Ascending aorta (tissue), 2 donors: ENCODE measurements at regions of chr10 and their contacts with region 1.

Region 1: DNA sequence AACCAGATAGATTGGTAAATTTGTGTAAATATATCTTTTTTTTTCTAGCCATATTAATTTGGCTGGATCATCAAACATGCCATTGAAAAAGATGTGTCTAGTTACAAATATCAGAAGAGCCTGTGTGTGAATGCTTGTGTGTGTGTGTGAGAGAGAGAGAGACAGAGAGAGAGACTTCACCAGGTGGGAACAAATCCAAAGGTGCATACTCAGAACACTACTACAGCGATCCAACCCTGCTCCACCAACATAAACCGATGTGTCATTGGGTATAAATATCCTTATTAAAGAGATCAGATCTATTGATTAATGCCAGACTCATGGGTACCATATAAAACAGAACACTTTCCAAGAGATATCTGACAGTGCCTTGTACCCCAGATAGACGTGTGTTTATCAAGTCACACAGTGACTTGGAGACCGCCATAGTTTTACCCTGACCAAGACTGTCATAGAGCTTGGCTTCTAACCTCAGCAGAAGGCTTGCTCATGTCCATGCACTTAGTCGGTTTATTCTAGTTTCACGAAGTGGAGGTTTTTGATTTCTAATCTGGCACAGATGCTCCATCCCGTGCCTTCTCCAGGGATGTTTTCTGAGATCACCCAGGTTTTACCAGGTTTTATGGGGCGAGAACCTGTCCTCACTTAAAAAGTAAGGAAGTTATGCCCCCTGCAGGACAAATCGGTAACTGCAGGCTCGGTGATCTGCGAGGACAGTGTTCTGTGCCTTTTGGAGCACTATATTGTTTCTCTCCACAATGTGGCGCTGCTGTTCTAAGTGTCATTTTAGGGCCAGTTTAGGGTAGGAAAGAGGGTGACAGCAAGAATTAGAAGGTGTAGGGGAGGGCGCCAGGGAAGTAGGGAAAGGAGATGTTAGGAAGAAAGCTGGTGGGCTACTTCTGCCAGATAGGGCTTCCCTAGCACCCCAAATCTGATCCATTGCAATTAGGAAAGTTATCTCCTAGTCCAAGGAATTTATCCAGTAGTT is 29.3 kb upstream of the WNT8B start:
- DNase-seq: peak; percentile 63 to 97
- H3K4me3 ChIP-seq: no peak overlapping the region
- H3K27ac ChIP-seq: no peak overlapping the region
- H3K4me1 ChIP-seq: no peaks in the 10 kb centered on the region
- H3K27me3 ChIP-seq: no peaks in the 10 kb centered on the region
- CTCF ChIP-seq: peak; percentile 98 to 100 (median 98)

Region 2: GRCh38 chr10:100338434-100339036 is 95.0 kb before region 1 on chr10:
- intact Hi-C with region 1: loop called (anchors 1 kb)
- DNase-seq: peak; percentile 36 to 85
- H3K4me3 ChIP-seq: no peak overlapping the region
- H3K27ac ChIP-seq: no peak overlapping the region
- H3K4me1 ChIP-seq: no peaks in the 10 kb centered on the region
- H3K27me3 ChIP-seq: no peaks in the 10 kb centered on the region
- CTCF ChIP-seq: peak; percentile 87 to 91 (median 90)

Region 3: DNA sequence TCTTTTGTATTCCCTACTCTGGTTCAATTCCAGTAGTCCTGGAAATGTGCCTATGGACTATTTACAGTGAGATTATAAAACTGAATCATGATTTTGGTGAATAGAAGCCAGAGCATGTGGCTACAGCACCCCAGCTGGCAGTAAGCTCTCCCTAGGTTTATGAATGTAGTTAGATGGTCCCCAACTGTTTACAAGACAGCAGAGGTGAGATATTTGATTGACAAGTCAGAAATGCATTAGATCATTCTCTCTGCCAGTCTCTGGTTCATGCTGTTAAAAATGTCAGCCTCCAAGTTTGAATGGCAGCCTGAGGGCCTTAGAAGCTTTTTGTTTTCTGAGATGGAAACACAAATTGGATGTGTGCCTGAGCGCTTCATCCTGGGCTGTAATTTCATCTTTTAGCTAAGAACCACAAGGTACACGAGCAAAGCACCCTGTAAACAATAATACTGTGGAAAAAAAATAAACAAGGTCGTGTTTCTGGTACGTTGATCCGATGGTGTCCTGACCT is 1005.4 kb after region 1 on chr10:
- intact Hi-C with region 1: no loop called
- DNase-seq: no peak
- H3K4me3 ChIP-seq: no peak overlapping the region
- H3K27ac ChIP-seq: no peak overlapping the region
- H3K4me1 ChIP-seq: no peaks in the 10 kb centered on the region
- H3K27me3 ChIP-seq: no peaks in the 10 kb centered on the region
- CTCF ChIP-seq: no peak